ENCODE measurements at regions of chr4 and their contacts with region 1.

Region 1: DNA sequence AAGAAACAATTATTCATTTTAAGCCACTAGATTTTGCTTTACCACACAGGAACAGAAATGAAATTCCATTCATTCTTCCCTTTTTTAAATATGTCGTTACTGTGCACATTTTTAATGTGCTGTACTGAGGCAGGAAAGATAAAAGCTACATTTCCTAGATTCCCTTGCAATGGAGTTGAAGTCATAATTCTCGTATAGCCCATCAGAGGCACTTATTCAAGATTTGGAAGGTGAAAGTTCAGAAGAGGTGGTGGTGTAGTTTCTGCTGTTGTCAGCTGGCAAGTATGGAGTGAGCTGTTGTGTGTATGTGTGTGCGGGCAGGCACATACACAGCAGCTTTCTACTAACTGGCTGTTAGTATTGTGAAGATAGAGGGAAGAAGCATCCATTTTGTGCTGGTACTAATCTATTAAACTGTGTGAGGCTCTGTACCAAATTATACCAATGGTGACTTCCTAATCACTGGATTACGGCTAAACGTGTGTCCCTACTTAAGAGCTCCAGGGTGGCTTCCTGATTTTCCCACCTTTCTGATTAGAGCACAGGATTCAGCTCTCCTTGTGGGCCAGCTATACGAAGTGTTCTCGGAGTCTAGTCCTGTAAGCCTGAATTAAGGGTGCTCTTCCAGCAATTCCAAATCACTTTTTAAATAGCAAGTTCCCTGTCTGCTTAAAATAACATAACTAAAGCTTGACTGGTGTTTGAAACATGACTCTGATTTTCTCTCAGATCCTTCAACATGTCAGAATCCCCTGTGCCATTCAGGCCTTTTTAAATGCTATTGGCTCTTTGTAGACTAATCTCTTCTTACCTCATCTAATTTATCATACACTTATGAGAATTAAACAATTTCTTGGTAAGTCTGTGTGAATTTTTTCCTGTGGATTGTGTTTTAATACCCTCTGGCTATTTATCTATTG is 43.8 kb downstream of the PDS5A start:
- DNase-seq: no peak
- ATAC-seq: peak; percentile 33
- H3K4me3 ChIP-seq: 0 out of 2 replicates have a peak overlapping the region, but pooled peaks have one; percentile 25
- H3K27ac ChIP-seq: peak overlapping the region; percentile 1; the same call in 1 of the 2 replicates
- H3K4me1 ChIP-seq: peaks cover 32% of the 10 kb centered on the region
- H3K27me3 ChIP-seq: no peaks in the 10 kb centered on the region
- CTCF ChIP-seq: no peak
- EP300 ChIP-seq: no peak
- POLR2A ChIP-seq: no peak
- RAD21 ChIP-seq: no peak

Region 2: GRCh38 chr4:39947423-39947822 is 13.5 kb after region 1 on chr4:
- CTCF ChIA-PET with region 1: interaction called, 9 read pairs
- POLR2A ChIA-PET with region 1: interaction called, 6 read pairs
- RAD21 ChIA-PET with region 1: interaction called, 9 read pairs
- SMC1A ChIA-PET with region 1: interaction called, 51 read pairs
- in situ Hi-C with region 1: no loop called
- intact Hi-C with region 1: no loop called
- DNase-seq: no peak
- ATAC-seq: no peak
- H3K4me3 ChIP-seq: no peak overlapping the region
- H3K27ac ChIP-seq: peak overlapping the region; percentile 77
- H3K4me1 ChIP-seq: peaks cover 41% of the 10 kb centered on the region
- H3K27me3 ChIP-seq: no peaks in the 10 kb centered on the region
- CTCF ChIP-seq: no peak
- EP300 ChIP-seq: no peak
- POLR2A ChIP-seq: no peak
- RAD21 ChIP-seq: no peak

Region 3: GRCh38 chr4:39961311-39961877 is 27.5 kb after region 1 on chr4:
- CTCF ChIA-PET with region 1: interaction called, 7 read pairs
- POLR2A ChIA-PET with region 1: no interaction called
- RAD21 ChIA-PET with region 1: interaction called, 3 read pairs
- SMC1A ChIA-PET with region 1: interaction called, 11 read pairs
- in situ Hi-C with region 1: no loop called
- intact Hi-C with region 1: no loop called
- DNase-seq: no peak
- ATAC-seq: no peak
- H3K4me3 ChIP-seq: no peak overlapping the region
- H3K27ac ChIP-seq: no peak overlapping the region
- H3K4me1 ChIP-seq: peaks cover 14% of the 10 kb centered on the region
- H3K27me3 ChIP-seq: no peaks in the 10 kb centered on the region
- CTCF ChIP-seq: no peak
- EP300 ChIP-seq: no peak
- POLR2A ChIP-seq: no peak
- RAD21 ChIP-seq: no peak

Region 4: GRCh38 chr4:39970671-39971640 is 37.0 kb after region 1 on chr4:
- CTCF ChIA-PET with region 1: interaction called, 7 read pairs
- POLR2A ChIA-PET with region 1: interaction called, 7 read pairs
- RAD21 ChIA-PET with region 1: interaction called, 6 read pairs
- SMC1A ChIA-PET with region 1: interaction called, 14 read pairs
- in situ Hi-C with region 1: no loop called
- intact Hi-C with region 1: loop called (anchors 2 kb)
- DNase-seq: no peak
- ATAC-seq: peak; percentile 87
- H3K4me3 ChIP-seq: peak overlapping the region; percentile 48; the same call in 1 of the 2 replicates
- H3K27ac ChIP-seq: peak overlapping the region; percentile 41
- H3K4me1 ChIP-seq: peaks cover 14% of the 10 kb centered on the region
- H3K27me3 ChIP-seq: no peaks in the 10 kb centered on the region
- CTCF ChIP-seq: no peak
- EP300 ChIP-seq: no peak
- POLR2A ChIP-seq: no peak
- RAD21 ChIP-seq: no peak

Measured in GM12878 (cell line).